ENCODE measurements at regions of chr15 and their contacts with region 1.

Region 1: GRCh38 chr15:75453703-75454470 is 2.4 kb upstream of the SIN3A start:
- DNase-seq: peak; percentile 97
- H3K4me3 Mint-ChIP-seq: peak overlapping the region; percentile 98
- H3K27ac Mint-ChIP-seq: peak overlapping the region; percentile 100
- H3K4me1 Mint-ChIP-seq: peaks cover 33% of the 10 kb centered on the region
- H3K27me3 Mint-ChIP-seq: no peaks in the 10 kb centered on the region

Region 2: GRCh38 chr15:74540761-74541493 is 913.0 kb before region 1 on chr15 and contains the start of gene ARID3B:
- intact Hi-C with region 1: loop called (anchors 2 kb)
- DNase-seq: peak; percentile 91
- H3K4me3 Mint-ChIP-seq: peak within 1 kb of the TSS; percentile 94
- H3K27ac Mint-ChIP-seq: peak within 1 kb of the TSS; percentile 96
- H3K4me1 Mint-ChIP-seq: peaks cover 56% of the 10 kb centered on the region
- H3K27me3 Mint-ChIP-seq: no peaks in the 10 kb centered on the region
- total RNA-seq, gene ARID3B: 48.8 and 53.6 TPM in 2 replicates

Region 3: DNA sequence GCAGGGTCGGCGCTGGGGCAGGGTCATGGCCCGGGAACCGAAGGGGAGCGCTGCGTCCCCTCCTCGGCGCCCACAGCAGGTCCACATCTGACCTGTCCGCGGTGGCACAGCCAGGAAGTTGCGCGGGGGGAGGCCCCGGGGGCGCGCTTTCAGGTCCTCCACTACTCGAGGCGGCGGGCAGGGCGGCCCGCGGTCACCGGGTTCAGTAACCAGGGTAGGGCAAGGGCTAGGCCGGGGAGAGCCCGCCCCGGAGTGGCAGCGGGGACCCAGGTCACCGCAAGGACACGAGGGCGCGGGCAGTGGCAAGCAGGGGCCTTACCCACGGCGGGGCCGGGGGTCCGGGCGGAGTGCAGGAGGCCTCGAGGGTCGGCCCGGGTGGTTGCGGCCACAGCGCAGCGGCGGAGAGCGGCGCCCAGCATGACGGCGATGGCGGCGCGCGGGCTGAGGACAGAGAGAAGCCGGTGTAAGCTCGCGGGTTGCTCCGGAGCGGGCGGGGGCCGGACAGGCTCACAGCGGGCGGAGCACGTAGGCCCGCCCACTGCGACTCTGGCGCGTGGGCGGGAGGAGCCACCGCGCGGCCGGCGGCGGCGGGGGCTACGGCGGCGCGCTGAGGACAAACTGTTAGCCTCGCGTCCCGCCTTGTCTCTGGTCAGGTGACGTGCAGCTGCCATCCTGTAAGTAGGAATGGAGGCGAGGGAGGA is 516.1 kb before region 1 on chr15 and contains the start of gene COX5A:
- intact Hi-C with region 1: loop called (anchors 1 kb)
- DNase-seq: peak; percentile 91
- H3K4me3 Mint-ChIP-seq: peak within 1 kb of the TSS; percentile 91
- H3K27ac Mint-ChIP-seq: peak within 1 kb of the TSS; percentile 91
- H3K4me1 Mint-ChIP-seq: peaks cover 22% of the 10 kb centered on the region
- H3K27me3 Mint-ChIP-seq: no peaks in the 10 kb centered on the region
- total RNA-seq, gene COX5A: 273 and 290 TPM in 2 replicates

Region 4: GRCh38 chr15:75335705-75336355 is 118.1 kb before region 1 on chr15 and contains the start of gene COMMD4:
- intact Hi-C with region 1: loop called (anchors 2 kb)
- DNase-seq: peak; percentile 81
- H3K4me3 Mint-ChIP-seq: peak within 1 kb of the TSS; percentile 98
- H3K27ac Mint-ChIP-seq: peak within 1 kb of the TSS; percentile 95
- H3K4me1 Mint-ChIP-seq: peaks cover 21% of the 10 kb centered on the region
- H3K27me3 Mint-ChIP-seq: peaks cover 2% of the 10 kb centered on the region
- total RNA-seq, gene COMMD4: 79.8 and 79.9 TPM in 2 replicates

Region 5: GRCh38 chr15:75625542-75626347 is 171.9 kb after region 1 on chr15 and contains the start of gene SNUPN:
- intact Hi-C with region 1: loop called (anchors 1 kb)
- DNase-seq: peak; percentile 90
- H3K4me3 Mint-ChIP-seq: peak within 1 kb of the TSS; percentile 94
- H3K27ac Mint-ChIP-seq: peak within 1 kb of the TSS; percentile 100
- H3K4me1 Mint-ChIP-seq: peaks cover 38% of the 10 kb centered on the region
- H3K27me3 Mint-ChIP-seq: no peaks in the 10 kb centered on the region
- total RNA-seq, gene SNUPN: 30.8 and 34.1 TPM in 2 replicates

Region 6: DNA sequence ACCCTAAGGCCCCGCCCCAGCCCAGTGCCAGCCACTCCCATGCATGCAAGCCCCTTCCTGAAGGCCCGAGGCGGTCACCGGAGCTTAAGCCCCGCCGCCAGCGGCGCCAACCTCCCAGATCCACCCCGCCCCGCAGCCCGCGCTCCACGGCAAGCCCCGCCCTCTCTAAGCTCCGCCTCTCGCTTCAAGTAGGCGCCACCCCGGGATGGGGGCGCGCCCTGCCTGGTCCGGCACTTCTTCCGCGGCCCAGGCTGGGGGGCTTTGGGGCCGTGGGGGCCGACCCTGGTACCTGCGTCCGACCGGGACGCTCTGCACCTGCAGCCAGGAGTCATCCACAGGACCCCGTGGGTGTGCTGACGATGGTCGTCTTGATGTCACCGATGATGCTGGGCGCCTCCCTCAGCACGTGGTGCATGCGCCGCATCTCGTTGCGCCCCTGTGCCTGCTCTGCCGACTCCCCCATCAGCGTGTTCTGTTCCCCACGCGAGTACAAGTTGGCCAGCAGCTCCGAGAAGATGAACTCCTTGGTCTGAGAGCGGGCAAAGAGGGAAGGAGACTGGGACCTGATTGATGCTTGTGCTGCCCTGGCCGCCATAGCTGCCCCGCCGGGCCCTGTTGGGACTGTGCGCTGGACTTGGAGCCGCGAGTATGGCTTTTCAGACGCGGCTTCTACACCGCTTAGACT is 284.9 kb after region 1 on chr15:
- intact Hi-C with region 1: loop called (anchors 1 kb)
- DNase-seq: peak; percentile 85
- H3K4me3 Mint-ChIP-seq: peak overlapping the region; percentile 75
- H3K27ac Mint-ChIP-seq: peak overlapping the region; percentile 29
- H3K4me1 Mint-ChIP-seq: peaks cover 6% of the 10 kb centered on the region
- H3K27me3 Mint-ChIP-seq: peaks cover 13% of the 10 kb centered on the region

Region 7: DNA sequence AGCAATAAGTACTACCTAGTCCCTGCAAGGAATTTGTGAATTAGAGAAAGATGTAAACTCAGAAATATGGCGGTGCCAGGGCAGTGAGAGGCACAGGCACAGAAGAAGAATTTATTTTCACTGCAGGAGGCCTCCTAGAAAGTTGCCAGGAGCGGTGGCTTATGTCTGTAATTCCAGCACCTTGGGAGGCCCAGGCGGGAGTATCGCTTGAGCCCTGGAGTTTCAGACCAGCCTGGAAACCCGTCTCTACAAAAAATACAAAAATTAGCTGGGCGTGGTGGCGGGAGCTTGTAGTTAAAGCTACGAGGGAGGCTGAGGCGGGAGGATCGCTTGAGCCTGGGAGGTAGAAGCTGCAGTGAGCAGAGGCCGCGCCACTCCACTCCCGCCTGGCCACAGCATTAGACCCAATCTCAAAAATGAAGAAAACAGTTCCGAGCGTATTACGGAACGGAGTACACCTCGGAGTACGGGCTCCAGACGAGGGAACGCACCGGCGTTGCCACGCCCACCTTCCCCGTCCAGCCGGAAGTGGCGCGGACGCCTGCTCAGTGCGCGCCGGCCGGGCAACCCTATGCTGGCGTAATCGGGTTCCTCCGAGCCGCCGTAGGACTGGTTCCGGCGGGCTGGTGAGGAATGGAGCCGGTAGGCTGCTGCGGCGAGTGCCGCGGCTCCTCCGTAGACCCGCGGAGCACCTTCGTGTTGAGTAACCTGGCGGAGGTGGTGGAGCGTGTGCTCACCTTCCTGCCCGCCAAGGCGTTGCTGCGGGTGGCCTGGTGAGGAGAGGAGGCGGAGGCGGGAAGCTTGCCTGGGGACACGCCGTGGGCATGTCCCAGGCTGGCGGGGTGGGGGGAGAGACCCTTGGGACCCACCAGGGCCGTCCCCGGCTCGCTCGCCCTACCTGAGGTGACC is 449.7 kb after region 1 on chr15 and contains the start of gene FBXO22:
- intact Hi-C with region 1: loop called (anchors 5 kb)
- DNase-seq: peak; percentile 89
- H3K4me3 Mint-ChIP-seq: peak within 1 kb of the TSS; percentile 99
- H3K27ac Mint-ChIP-seq: peak within 1 kb of the TSS; percentile 98
- H3K4me1 Mint-ChIP-seq: peaks cover 35% of the 10 kb centered on the region
- H3K27me3 Mint-ChIP-seq: no peaks in the 10 kb centered on the region
- total RNA-seq, gene FBXO22: 49.4 and 50.0 TPM in 2 replicates